CD4-positive, alpha-beta memory T cell (primary cell): ENCODE measurements at regions of chr16 and their contacts with region 1.

Region 1: GRCh38 chr16:56608043-56608875 is at the start of gene MT2A:
- DNase-seq: peak; percentile 81 to 93 (median 85)
- H3K4me3 ChIP-seq: peak within 1 kb of the TSS; percentile 70 to 94
- H3K4me3 Mint-ChIP-seq: peak within 1 kb of the TSS; percentile 92 to 99 (median 98)
- H3K27ac ChIP-seq: peak within 1 kb of the TSS; percentile 82
- H3K27ac Mint-ChIP-seq: peak within 1 kb of the TSS; percentile 88 to 100 (median 96)
- H3K4me1 ChIP-seq: peaks cover 46% of the 10 kb centered on the region
- H3K4me1 Mint-ChIP-seq: peaks cover 26 to 53% (median 39%) of the 10 kb centered on the region in 4 donors
- H3K27me3 ChIP-seq: no peaks in the 10 kb centered on the region
- H3K27me3 Mint-ChIP-seq: peaks cover 0 to 3% of the 10 kb centered on the region in 2 donors
- total RNA-seq, gene MT2A: 15.8 to 17.7 TPM

Region 2: GRCh38 chr16:56382901-56383355 is 225.3 kb before region 1 on chr16:
- CTCF ChIA-PET with region 1: no interaction called
- POLR2A ChIA-PET with region 1: no interaction called
- intact Hi-C with region 1: no loop called
- DNase-seq: no peak
- H3K4me3 ChIP-seq: no peak overlapping the region
- H3K4me3 Mint-ChIP-seq: no peak overlapping the region
- H3K27ac ChIP-seq: no peak overlapping the region
- H3K27ac Mint-ChIP-seq: no peak overlapping the region
- H3K4me1 ChIP-seq: no peaks in the 10 kb centered on the region
- H3K4me1 Mint-ChIP-seq: peaks cover 0 to 7% (median 6%) of the 10 kb centered on the region in 4 donors
- H3K27me3 ChIP-seq: no peaks in the 10 kb centered on the region
- H3K27me3 Mint-ChIP-seq: no peaks in the 10 kb centered on the region

Region 3: DNA sequence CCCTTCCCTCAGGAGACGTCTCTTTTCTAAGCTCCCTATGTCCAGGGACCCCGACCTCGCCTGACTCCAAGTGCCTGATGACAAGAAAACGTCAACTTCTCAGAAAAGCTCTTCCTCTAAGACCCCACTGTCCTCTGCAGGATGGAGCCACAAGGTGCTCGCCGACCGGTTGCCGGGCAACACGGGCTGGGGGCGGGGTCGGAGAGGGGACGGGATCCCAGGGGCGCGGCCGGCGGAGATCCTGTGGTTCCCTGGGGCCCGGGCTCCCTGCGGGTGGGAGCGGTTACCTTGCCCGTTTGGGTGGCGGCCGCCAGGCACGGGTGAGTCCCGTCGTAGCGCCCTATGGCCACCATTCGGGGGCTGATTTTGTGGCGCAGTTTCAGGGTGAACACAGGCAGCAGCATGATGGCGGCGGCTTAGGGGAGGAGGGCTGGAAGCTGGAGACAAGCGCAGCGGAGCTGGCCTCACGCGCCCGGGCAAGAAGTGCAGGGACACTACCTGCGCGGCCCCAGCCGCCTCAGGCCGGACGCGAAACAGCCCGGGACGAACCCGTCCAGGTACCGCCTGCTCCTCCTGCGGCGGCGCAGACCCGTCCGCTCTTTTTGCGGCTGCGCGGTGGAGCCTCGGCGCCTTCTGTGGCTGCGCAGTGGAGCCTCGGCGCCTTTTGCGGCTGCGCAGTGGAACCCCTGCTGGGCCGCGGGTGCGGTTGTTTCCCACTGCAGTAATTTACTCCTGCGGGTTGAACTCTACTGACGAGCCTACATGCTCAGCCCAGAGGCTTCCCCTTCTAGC is 88.6 kb before region 1 on chr16 and contains the start of gene BBS2:
- CTCF ChIA-PET with region 1: no interaction called
- POLR2A ChIA-PET with region 1: interaction called, 11 read pairs
- intact Hi-C with region 1: no loop called
- DNase-seq: peak; percentile 88 to 92 (median 91)
- H3K4me3 ChIP-seq: peak within 1 kb of the TSS; percentile 63 to 93
- H3K4me3 Mint-ChIP-seq: peak within 1 kb of the TSS; percentile 86 to 90 (median 88)
- H3K27ac ChIP-seq: peak within 1 kb of the TSS; percentile 73
- H3K27ac Mint-ChIP-seq: peak within 1 kb of the TSS; percentile 82 to 93 (median 92)
- H3K4me1 ChIP-seq: peaks cover 37% of the 10 kb centered on the region
- H3K4me1 Mint-ChIP-seq: peaks cover 37 to 59% (median 44%) of the 10 kb centered on the region in 4 donors
- H3K27me3 ChIP-seq: no peaks in the 10 kb centered on the region
- H3K27me3 Mint-ChIP-seq: no peaks in the 10 kb centered on the region
- total RNA-seq, gene BBS2: 95.8 to 96.0 TPM

Region 4: DNA sequence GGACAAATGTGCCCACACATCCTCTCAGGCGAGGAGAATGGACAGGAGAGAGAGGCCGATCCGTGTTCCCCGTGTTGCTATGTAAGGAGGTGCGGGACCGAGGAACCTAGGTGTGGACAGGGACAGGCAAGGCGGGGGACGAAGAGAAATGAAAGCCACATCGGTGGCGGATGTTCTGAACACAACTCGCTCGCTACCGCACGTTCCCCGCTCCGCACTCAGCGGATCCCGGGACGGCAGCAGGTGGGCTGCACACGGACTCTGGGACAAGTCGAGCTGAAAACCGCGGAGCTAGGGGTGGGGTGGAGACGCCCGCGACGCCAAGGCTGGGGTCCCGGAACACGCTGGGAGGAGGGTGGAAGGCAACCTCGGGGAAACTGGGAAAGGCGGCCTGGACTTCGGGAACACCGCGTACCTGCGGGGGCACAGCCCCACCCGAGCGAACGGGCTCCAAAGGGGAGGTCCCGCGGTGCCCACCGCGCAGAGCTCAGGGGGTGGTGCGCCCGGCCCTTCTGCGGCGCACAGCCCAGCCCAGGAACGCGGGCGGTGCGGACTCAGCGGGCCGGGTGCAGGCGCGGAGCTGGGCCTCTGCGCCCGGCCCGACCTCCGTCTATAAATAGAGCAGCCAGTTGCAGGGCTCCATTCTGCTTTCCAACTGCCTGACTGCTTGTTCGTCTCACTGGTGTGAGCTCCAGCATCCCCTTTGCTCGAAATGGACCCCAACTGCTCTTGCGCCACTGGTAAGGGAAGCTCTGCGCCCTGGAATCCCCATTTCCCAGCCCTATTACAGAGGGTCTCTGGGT is 17.1 kb after region 1 on chr16 and contains the start of gene MT1E:
- CTCF ChIA-PET with region 1: interaction called, 9 read pairs
- POLR2A ChIA-PET with region 1: interaction called, 15 read pairs
- intact Hi-C with region 1: no loop called
- DNase-seq: peak in 4 of 5 donors; percentile 27 to 56 (median 50)
- H3K4me3 ChIP-seq: peak within 1 kb of the TSS; percentile 48 to 68
- H3K4me3 Mint-ChIP-seq: peak within 1 kb of the TSS; percentile 88 to 97 (median 94)
- H3K27ac ChIP-seq: peak within 1 kb of the TSS; percentile 24
- H3K27ac Mint-ChIP-seq: peak within 1 kb of the TSS; percentile 44 to 95 (median 86)
- H3K4me1 ChIP-seq: peaks cover 14% of the 10 kb centered on the region
- H3K4me1 Mint-ChIP-seq: peaks cover 11 to 18% (median 12%) of the 10 kb centered on the region in 4 donors
- H3K27me3 ChIP-seq: peaks cover 9% of the 10 kb centered on the region
- H3K27me3 Mint-ChIP-seq: peaks cover 0 to 31% of the 10 kb centered on the region in 2 donors
- total RNA-seq, gene MT1E: not detected

Region 5: GRCh38 chr16:56643080-56643778 is 35.0 kb after region 1 on chr16:
- CTCF ChIA-PET with region 1: interaction called, 22 read pairs
- POLR2A ChIA-PET with region 1: interaction called, 17 read pairs
- intact Hi-C with region 1: loop called (anchors 1 kb)
- DNase-seq: peak; percentile 63 to 76 (median 71)
- H3K4me3 ChIP-seq: peak overlapping the region in 1 of 2 donors; percentile 0
- H3K4me3 Mint-ChIP-seq: peak overlapping the region; percentile 75 to 84 (median 79)
- H3K27ac ChIP-seq: no peak overlapping the region
- H3K27ac Mint-ChIP-seq: peak overlapping the region in 5 of 7 donors; percentile 63 to 77 (median 67)
- H3K4me1 ChIP-seq: peaks cover 16% of the 10 kb centered on the region
- H3K4me1 Mint-ChIP-seq: peaks cover 18 to 22% (median 19%) of the 10 kb centered on the region in 4 donors
- H3K27me3 ChIP-seq: peaks cover 14% of the 10 kb centered on the region
- H3K27me3 Mint-ChIP-seq: peaks cover 12 to 23% of the 10 kb centered on the region in 2 donors

Region 6: DNA sequence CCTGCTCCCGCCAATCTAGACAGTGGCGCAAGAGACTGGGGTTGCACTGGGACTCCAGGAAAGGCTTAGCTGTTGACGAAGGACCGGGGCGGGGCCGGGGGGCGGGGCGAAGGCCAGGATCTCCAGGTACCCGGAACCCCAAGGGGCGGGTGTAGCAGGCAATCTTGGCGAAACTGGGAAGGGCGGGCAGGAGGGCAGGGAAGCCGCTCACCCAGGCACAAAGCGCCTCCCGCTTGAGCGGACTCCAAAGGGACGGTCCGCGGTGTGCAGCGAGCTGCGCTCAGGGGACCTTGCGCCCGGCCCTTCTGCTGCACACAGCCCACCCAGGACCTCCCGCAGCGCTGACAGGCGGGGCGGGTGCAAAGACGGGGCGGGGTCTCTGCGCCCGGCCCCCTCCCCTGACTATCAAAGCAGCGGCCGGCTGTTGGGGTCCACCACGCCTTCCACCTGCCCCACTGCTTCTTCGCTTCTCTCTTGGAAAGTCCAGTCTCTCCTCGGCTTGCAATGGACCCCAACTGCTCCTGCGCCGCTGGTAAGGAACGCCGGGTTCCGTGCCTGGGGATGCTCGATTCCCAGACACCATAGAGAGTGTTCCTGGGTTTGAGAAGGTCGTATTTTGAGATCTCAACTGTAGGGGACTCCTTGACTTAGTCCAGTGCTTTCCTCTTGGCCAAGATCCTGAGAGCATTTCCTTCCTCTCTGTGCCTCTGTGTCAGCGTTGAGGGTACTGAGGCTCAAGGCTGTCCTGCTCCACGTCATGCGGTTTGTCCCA is 49.5 kb after region 1 on chr16 and contains the start of gene MT1F:
- CTCF ChIA-PET with region 1: no interaction called
- POLR2A ChIA-PET with region 1: interaction called, 10 read pairs
- intact Hi-C with region 1: loop called (anchors 1 kb)
- DNase-seq: peak; percentile 40 to 78 (median 53)
- H3K4me3 ChIP-seq: peak within 1 kb of the TSS; percentile 62 to 65
- H3K4me3 Mint-ChIP-seq: peak within 1 kb of the TSS; percentile 90 to 99 (median 96)
- H3K27ac ChIP-seq: peak within 1 kb of the TSS; percentile 39
- H3K27ac Mint-ChIP-seq: peak within 1 kb of the TSS; percentile 79 to 97 (median 93)
- H3K4me1 ChIP-seq: peaks cover 17% of the 10 kb centered on the region
- H3K4me1 Mint-ChIP-seq: peaks cover 16 to 35% (median 24%) of the 10 kb centered on the region in 4 donors
- H3K27me3 ChIP-seq: no peaks in the 10 kb centered on the region
- H3K27me3 Mint-ChIP-seq: peaks cover 2 to 4% of the 10 kb centered on the region in 2 donors
- total RNA-seq, gene MT1F: 8.3 to 12.9 TPM

Region 7: DNA sequence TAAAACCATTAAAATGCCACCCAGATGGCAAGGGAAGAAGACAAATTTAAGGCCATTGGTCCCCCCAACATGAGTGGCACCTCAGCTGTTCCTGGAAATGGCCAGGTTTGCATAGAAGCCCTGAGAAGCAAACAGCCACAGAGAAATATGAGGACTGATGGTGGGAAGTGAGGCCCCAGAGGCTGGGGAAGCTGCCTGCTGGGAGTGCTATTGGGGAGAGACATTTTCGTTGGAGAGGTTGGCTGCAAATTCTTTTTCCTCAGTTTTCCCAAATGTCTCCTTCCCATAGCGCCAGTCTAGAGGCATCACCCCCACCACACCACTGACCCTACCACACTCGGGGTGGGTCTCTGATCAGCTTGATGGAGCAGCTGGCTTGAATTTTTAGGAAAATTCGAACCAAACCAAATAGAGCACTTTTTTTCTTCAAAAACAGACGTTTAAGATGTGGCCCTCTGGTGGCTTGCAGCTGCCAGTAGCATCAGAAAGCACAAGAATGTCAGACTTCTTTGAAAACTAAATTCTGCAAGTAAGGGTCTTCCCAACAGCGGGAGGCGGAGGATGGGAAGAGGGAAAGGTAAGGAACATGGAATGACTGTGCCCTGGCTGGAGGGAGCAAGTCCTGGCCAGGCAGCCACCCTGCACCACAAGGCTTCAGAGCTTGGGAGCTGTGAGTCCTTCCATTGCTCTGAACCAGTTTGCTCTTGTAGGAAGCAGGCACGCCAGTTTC is 243.6 kb after region 1 on chr16:
- CTCF ChIA-PET with region 1: no interaction called
- POLR2A ChIA-PET with region 1: no interaction called
- intact Hi-C with region 1: no loop called
- DNase-seq: no peak
- H3K4me3 ChIP-seq: no peak overlapping the region
- H3K4me3 Mint-ChIP-seq: no peak overlapping the region
- H3K27ac ChIP-seq: no peak overlapping the region
- H3K27ac Mint-ChIP-seq: peak overlapping the region in 1 of 7 donors; percentile 29
- H3K4me1 ChIP-seq: peaks cover 11% of the 10 kb centered on the region
- H3K4me1 Mint-ChIP-seq: peaks cover 11 to 19% (median 13%) of the 10 kb centered on the region in 4 donors
- H3K27me3 ChIP-seq: no peaks in the 10 kb centered on the region
- H3K27me3 Mint-ChIP-seq: no peaks in the 10 kb centered on the region